Prostate gland (tissue), 2 donors: ENCODE measurements at regions of chr6 and their contacts with region 1.

Region 1: GRCh38 chr6:126077810-126078776 is 91.8 kb downstream of the TRMT11 start:
- DNase-seq: no peak
- H3K4me3 ChIP-seq: no peak overlapping the region
- H3K27ac ChIP-seq: peak overlapping the region in 1 of 2 donors; percentile 13
- H3K4me1 ChIP-seq: no peaks in the 10 kb centered on the region
- H3K27me3 ChIP-seq: no peaks in the 10 kb centered on the region
- CTCF ChIP-seq: no peak
- POLR2A ChIP-seq: no peak

Region 2: DNA sequence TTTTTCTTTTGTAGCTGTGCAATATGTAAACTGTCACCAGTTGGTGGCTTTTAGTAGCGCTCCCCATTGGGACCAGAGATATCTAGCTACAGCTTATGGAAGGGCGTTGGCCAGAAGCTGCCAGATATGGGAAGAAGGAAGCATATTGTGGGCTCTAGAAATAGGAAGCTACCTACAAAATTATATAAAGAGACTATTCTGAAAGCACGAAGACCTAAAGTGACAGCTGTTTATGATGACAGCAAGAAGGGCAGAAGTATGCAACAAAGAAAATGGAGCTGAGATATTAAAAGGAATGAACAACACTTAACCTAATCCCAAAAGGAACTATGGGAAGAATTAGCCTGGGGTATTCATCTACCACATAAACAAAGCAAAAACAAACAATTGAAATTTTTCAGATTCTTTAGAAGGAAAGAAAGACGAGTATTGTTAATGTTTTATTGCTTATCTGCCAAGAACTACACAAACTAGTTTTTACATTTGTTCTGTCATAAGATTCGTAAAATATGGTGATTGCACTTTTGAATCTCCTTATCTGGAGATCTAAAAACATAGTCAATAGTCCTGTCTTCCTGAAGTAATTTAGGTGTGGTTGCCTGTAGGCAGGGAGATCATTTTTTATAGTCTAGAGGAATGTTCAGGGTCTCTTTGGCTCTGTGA is 205.7 kb before region 1 on chr6:
- intact Hi-C with region 1: no loop called
- DNase-seq: no peak
- H3K4me3 ChIP-seq: no peak overlapping the region
- H3K27ac ChIP-seq: no peak overlapping the region
- H3K4me1 ChIP-seq: no peaks in the 10 kb centered on the region
- H3K27me3 ChIP-seq: no peaks in the 10 kb centered on the region
- CTCF ChIP-seq: no peak
- POLR2A ChIP-seq: no peak

Region 3: GRCh38 chr6:126039284-126039683 is 38.8 kb before region 1 on chr6:
- intact Hi-C with region 1: loop called (anchors 5 kb)
- DNase-seq: no peak
- H3K4me3 ChIP-seq: no peak overlapping the region
- H3K27ac ChIP-seq: no peak overlapping the region
- H3K4me1 ChIP-seq: no peaks in the 10 kb centered on the region
- H3K27me3 ChIP-seq: no peaks in the 10 kb centered on the region
- CTCF ChIP-seq: no peak
- POLR2A ChIP-seq: no peak

Region 4: DNA sequence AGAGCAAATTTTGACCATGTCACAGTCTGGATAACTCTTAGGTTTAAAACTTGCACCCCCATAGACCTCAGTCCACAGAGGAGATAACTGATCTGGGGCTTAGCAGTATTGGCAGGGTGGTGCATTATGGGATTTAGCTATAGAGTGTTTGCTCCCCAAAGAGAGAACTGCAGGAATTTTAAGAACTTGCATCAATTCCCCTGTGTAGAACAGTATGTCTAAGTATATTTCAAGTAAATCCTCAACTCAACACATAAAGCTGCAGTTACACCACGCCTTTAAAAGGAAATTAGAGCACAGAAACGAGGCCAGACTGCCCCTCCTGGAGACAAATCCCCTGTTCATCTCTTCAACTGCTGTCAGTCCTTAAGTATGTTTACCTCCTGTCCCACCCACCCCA is 53.2 kb after region 1 on chr6:
- intact Hi-C with region 1: no loop called
- DNase-seq: no peak
- H3K4me3 ChIP-seq: no peak overlapping the region
- H3K27ac ChIP-seq: no peak overlapping the region
- H3K4me1 ChIP-seq: no peaks in the 10 kb centered on the region
- H3K27me3 ChIP-seq: no peaks in the 10 kb centered on the region
- CTCF ChIP-seq: no peak
- POLR2A ChIP-seq: no peak

Region 5: GRCh38 chr6:126444659-126445273 is 366.7 kb after region 1 on chr6:
- intact Hi-C with region 1: no loop called
- DNase-seq: no peak
- H3K4me3 ChIP-seq: no peak overlapping the region
- H3K27ac ChIP-seq: no peak overlapping the region
- H3K4me1 ChIP-seq: no peaks in the 10 kb centered on the region
- H3K27me3 ChIP-seq: no peaks in the 10 kb centered on the region
- CTCF ChIP-seq: no peak
- POLR2A ChIP-seq: no peak